Aorta (tissue), 5 donors: ENCODE measurements at regions of chr3 and their contacts with region 1.

Region 1: GRCh38 chr3:57803647-57804081 is 47.6 kb downstream of the SLMAP start:
- DNase-seq: no peak
- ATAC-seq: peak; percentile 83
- H3K4me3 ChIP-seq: peak overlapping the region in 1 of 2 donors; percentile 1
- H3K27ac ChIP-seq: no peak overlapping the region
- H3K4me1 ChIP-seq: peaks cover 0 to 2% of the 10 kb centered on the region in 2 donors
- H3K27me3 ChIP-seq: no peaks in the 10 kb centered on the region

Region 2: DNA sequence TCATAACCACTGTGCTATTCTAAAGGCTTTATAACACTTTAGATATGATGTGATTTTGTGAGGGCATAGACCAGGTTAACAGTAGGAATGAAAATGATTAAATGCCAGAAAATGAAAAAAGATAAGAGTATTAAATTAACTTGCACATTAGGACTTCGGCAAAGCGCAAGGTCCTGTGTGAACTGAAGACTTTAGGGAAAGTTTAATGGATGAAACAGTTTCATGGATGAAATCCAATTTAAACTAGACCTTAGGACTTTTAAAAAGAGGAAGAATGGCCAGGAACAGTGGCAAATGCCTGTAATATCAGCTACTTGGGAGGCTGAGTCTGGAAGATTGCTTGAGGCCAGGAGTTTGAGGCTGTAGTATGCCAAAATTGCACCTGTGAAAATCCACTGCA is 38.9 kb before region 1 on chr3:
- intact Hi-C with region 1: loop called in 1 of 2 experiments (anchors 5 kb)
- DNase-seq: no peak
- ATAC-seq: no peak
- H3K4me3 ChIP-seq: no peak overlapping the region
- H3K27ac ChIP-seq: no peak overlapping the region
- H3K4me1 ChIP-seq: no peaks in the 10 kb centered on the region
- H3K27me3 ChIP-seq: no peaks in the 10 kb centered on the region